ENCODE measurements at regions of chr2 and their contacts with region 1.

Region 1: GRCh38 chr2:189440947-189441708 is at the start of gene WDR75:
- DNase-seq: peak; percentile 84
- ATAC-seq: peak; percentile 92
- H3K4me3 ChIP-seq: peak within 1 kb of the TSS; percentile 86
- H3K27ac ChIP-seq: peak within 1 kb of the TSS; percentile 71
- H3K4me1 ChIP-seq: peaks cover 28% of the 10 kb centered on the region
- H3K27me3 ChIP-seq: no peaks in the 10 kb centered on the region
- CTCF ChIP-seq: no peak
- EP300 ChIP-seq: 0 out of 4 replicates have a peak, but pooled peaks of 1 of the 2 experiments have one; percentile 33
- POLR2A ChIP-seq: peak; percentile 98
- RAD21 ChIP-seq: no peak
- polyA plus RNA-seq, gene WDR75: 53.1 to 55.2 TPM

Region 2: DNA sequence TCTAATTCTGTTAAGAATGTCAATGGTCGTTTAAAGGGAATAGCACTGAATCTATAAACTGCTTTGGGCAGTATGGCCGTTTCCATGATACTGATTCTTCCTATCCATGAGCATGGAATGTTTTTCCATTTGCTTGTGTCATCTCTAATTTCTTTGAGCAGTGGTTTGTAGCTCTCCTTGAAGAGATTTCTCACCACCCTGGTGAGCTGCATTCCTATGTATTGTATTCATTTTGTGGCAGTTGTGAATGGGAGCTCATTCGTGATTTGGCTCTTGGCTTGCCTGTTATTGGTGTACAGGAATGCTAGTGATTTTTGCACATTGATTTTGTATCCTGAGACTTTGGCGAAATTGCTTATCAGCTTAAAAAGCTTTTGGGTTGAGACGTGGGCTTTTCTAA is 38.2 kb before region 1 on chr2:
- CTCF ChIA-PET with region 1: no interaction called
- POLR2A ChIA-PET with region 1: no interaction called
- RAD21 ChIA-PET with region 1: no interaction called
- SMC1A ChIA-PET with region 1: no interaction called
- in situ Hi-C with region 1: no loop called
- intact Hi-C with region 1: no loop called
- DNase-seq: no peak
- ATAC-seq: no peak
- H3K4me3 ChIP-seq: no peak overlapping the region
- H3K27ac ChIP-seq: no peak overlapping the region
- H3K4me1 ChIP-seq: no peaks in the 10 kb centered on the region
- H3K27me3 ChIP-seq: no peaks in the 10 kb centered on the region
- CTCF ChIP-seq: no peak
- EP300 ChIP-seq: no peak
- POLR2A ChIP-seq: no peak
- RAD21 ChIP-seq: no peak

Region 3: GRCh38 chr2:189454009-189454408 is 12.9 kb after region 1 on chr2:
- CTCF ChIA-PET with region 1: interaction called, 3 read pairs
- POLR2A ChIA-PET with region 1: interaction called, 3 read pairs
- RAD21 ChIA-PET with region 1: no interaction called
- SMC1A ChIA-PET with region 1: interaction called, 19 read pairs
- in situ Hi-C with region 1: no loop called
- intact Hi-C with region 1: no loop called
- DNase-seq: no peak
- ATAC-seq: no peak
- H3K4me3 ChIP-seq: no peak overlapping the region
- H3K27ac ChIP-seq: no peak overlapping the region
- H3K4me1 ChIP-seq: no peaks in the 10 kb centered on the region
- H3K27me3 ChIP-seq: no peaks in the 10 kb centered on the region
- CTCF ChIP-seq: no peak
- EP300 ChIP-seq: no peak
- POLR2A ChIP-seq: no peak
- RAD21 ChIP-seq: no peak

Measured in GM12878 (cell line).